PC-3 (cell line): ENCODE measurements at regions of chr6 and their contacts with region 1.

Region 1: GRCh38 chr6:44192428-44193041 is 24.2 kb upstream of the MYMX start:
- DNase-seq: no peak
- ATAC-seq: no peak
- H3K4me3 ChIP-seq: no peak overlapping the region
- H3K27ac ChIP-seq: no peak overlapping the region
- H3K4me1 ChIP-seq: no peaks in the 10 kb centered on the region
- H3K27me3 ChIP-seq: no peaks in the 10 kb centered on the region
- CTCF ChIP-seq: no peak

Region 2: GRCh38 chr6:44179072-44179536 is 13.4 kb before region 1 on chr6:
- CTCF ChIA-PET with region 1: no interaction called
- POLR2A ChIA-PET with region 1: interaction called, 13 read pairs
- intact Hi-C with region 1: no loop called
- DNase-seq: peak; percentile 40
- ATAC-seq: peak; percentile 59
- H3K4me3 ChIP-seq: no peak overlapping the region
- H3K27ac ChIP-seq: 0 out of 2 replicates have a peak overlapping the region, but pooled peaks have one; percentile 7
- H3K4me1 ChIP-seq: peaks cover 17% of the 10 kb centered on the region
- H3K27me3 ChIP-seq: no peaks in the 10 kb centered on the region
- CTCF ChIP-seq: no peak

Region 3: DNA sequence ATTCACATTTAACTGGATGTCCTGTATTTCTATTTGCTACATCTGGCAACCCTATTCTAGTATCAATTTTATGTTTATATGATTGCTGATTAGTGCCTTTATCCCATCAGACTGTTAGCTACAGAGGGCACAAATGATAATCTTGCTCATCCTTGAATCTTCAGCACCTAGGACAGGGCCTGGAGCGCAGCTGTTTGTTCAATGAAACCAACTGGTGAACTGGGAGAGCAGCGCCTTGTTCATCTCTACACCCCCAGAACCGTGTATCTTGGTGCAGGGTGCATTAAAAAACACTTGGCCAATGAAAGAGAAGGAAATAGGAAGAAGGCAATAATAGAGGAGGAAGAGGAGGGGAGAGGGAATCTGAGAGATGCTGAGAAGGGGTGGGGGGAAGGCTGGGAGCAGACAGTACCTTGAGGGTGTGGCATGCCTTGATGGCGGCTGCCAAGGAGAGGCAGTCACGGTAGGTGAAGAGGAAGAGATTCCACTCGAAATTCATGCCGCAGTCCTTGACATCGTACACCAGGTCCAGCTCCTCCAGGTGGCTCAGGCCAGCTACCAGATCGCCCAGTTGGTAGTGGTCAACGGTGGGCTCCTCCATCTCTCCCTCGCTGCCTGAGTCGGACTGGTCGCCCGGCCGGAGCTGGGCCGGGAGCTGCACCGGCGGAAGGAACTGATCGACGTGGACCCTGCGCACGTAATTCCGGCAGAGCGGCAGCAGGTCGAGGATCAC is 93.2 kb after region 1 on chr6:
- CTCF ChIA-PET with region 1: no interaction called
- POLR2A ChIA-PET with region 1: interaction called, 11 read pairs
- intact Hi-C with region 1: no loop called
- DNase-seq: peak; percentile 34
- ATAC-seq: no peak
- H3K4me3 ChIP-seq: no peak overlapping the region
- H3K27ac ChIP-seq: no peak overlapping the region
- H3K4me1 ChIP-seq: no peaks in the 10 kb centered on the region
- H3K27me3 ChIP-seq: peaks cover 77% of the 10 kb centered on the region
- CTCF ChIP-seq: no peak